ENCODE measurements at regions of chr16 and their contacts with region 1.

Region 1: GRCh38 chr16:31142109-31143010 is 6.8 kb upstream of the PRSS8 start:
- DNase-seq: peak; percentile 97 to 99
- H3K4me3 ChIP-seq: peak overlapping the region; percentile 59 to 73
- H3K27ac ChIP-seq: peak overlapping the region; percentile 80 to 83
- H3K4me1 ChIP-seq: peaks cover 6 to 24% of the 10 kb centered on the region in 2 donors
- H3K27me3 ChIP-seq: no peaks in the 10 kb centered on the region
- CTCF ChIP-seq: peak; percentile 93 to 99 (median 96)

Region 2: GRCh38 chr16:30984669-30985400 is 157.5 kb before region 1 on chr16 and contains the start of gene HSD3B7:
- intact Hi-C with region 1: loop called (anchors 1 kb)
- DNase-seq: peak; percentile 69 to 95
- H3K4me3 ChIP-seq: peak within 1 kb of the TSS; percentile 43 to 59
- H3K27ac ChIP-seq: peak within 1 kb of the TSS; percentile 14 to 50
- H3K4me1 ChIP-seq: peaks cover 3 to 11% of the 10 kb centered on the region in 2 donors
- H3K27me3 ChIP-seq: no peaks in the 10 kb centered on the region
- CTCF ChIP-seq: peak; percentile 94 to 95 (median 95)
- total RNA-seq, gene HSD3B7: 35.2 TPM

Region 3: GRCh38 chr16:31073968-31074813 is 68.2 kb before region 1 on chr16 and contains the starts of genes ZNF646 and ZNF668:
- intact Hi-C with region 1: loop called (anchors 1 kb)
- DNase-seq: peak; percentile 91 to 99
- H3K4me3 ChIP-seq: peak within 1 kb of the TSS; percentile 73 to 87
- H3K27ac ChIP-seq: peak within 1 kb of the TSS; percentile 87 to 91
- H3K4me1 ChIP-seq: peaks cover 0 to 20% of the 10 kb centered on the region in 2 donors
- H3K27me3 ChIP-seq: no peaks in the 10 kb centered on the region
- CTCF ChIP-seq: no peak
- total RNA-seq, gene ZNF646: 11.6 TPM
- total RNA-seq, gene ZNF668: 12.2 TPM

Region 4: GRCh38 chr16:31108035-31108793 is 34.1 kb before region 1 on chr16 and contains the start of gene BCKDK:
- intact Hi-C with region 1: loop called (anchors 2 kb)
- DNase-seq: peak in 1 of 2 donors; percentile 85
- H3K4me3 ChIP-seq: peak within 1 kb of the TSS; percentile 90 to 99
- H3K27ac ChIP-seq: peak within 1 kb of the TSS; percentile 92 to 97
- H3K4me1 ChIP-seq: peaks cover 9 to 17% of the 10 kb centered on the region in 2 donors
- H3K27me3 ChIP-seq: no peaks in the 10 kb centered on the region
- CTCF ChIP-seq: no peak
- total RNA-seq, gene BCKDK: 85.8 TPM

Region 5: GRCh38 chr16:31125844-31126243 is 16.5 kb before region 1 on chr16:
- intact Hi-C with region 1: no loop called
- DNase-seq: no peak
- H3K4me3 ChIP-seq: no peak overlapping the region
- H3K27ac ChIP-seq: no peak overlapping the region
- H3K4me1 ChIP-seq: no peaks in the 10 kb centered on the region
- H3K27me3 ChIP-seq: no peaks in the 10 kb centered on the region
- CTCF ChIP-seq: no peak

Region 6: DNA sequence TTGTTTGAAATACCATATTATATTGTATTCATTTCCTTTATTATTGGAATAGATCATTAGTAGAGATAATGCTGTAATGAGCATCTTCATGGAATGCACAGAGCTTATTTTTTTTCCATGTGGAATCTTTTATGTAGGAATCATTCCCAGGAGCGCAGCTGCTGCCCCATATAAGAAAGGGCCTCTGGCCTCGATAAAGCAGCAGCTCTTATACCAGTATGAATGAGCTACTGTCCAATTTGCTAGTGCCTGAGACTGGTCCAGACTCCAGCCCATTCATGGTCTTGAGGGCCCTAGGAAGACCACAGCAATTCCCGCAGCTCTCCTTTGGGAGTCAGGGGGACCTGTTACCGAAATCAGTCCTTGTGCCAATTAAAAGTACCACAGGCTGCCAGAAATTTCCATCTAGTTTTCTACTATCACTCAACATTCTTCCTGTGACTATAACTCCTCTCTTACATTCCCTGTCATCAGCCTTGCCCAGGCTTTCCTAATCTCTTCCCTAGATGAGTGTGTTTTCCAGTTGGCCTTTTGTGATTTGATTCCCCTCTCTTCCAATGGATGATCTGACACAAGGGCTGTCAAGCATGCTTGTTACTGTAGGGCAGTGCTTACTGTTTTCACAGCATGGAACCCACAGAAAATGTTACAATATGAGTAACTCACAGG is 298.3 kb after region 1 on chr16:
- intact Hi-C with region 1: loop called (anchors 1 kb)
- DNase-seq: no peak
- H3K4me3 ChIP-seq: no peak overlapping the region
- H3K27ac ChIP-seq: no peak overlapping the region
- H3K4me1 ChIP-seq: no peaks in the 10 kb centered on the region
- H3K27me3 ChIP-seq: no peaks in the 10 kb centered on the region
- CTCF ChIP-seq: no peak

Measured in ascending aorta (tissue), 2 donors.